CD8-positive, alpha-beta memory T cell (primary cell): ENCODE measurements at regions of chr11 and their contacts with region 1.

Region 1: DNA sequence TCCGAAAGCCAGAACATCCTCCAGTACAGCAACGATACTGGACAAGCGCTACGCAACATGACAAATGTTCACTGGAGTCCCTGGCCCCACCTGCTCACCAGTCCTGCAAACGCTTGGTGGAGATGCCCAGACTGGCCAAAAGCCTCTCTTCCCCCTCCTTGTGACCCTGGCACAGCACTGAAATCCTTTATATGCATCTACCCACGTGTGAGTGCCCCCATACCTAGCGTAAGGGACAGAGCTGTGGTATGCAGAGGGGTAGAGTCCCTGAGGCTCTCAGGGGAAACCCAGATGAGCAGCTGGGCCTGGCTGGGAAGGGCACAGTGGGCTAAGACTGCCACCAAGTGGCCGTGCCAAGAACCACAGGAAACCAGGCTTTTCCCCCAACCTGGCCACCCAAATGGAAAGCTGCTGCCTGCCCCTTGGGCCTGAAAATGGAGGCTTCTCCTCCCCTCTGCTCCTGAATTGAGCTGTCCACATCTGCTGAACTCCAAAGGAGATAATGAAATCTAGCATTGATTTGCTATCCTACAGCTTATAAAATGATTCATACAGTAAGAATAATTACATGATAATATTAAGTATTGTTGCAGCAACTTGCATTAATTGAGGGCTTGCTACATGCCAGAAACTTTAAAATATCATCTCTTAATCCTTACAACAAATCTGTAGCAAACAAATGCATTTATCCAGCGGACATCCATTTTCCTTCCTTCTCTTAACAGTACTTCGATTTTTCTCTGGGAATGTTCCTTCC is 24.8 kb upstream of the TTC12 start:
- DNase-seq: peak; percentile 20 to 69 (median 40)
- H3K4me3 ChIP-seq: no peak overlapping the region
- H3K4me3 Mint-ChIP-seq: no peak overlapping the region
- H3K27ac ChIP-seq: no peak overlapping the region
- H3K27ac Mint-ChIP-seq: no peak overlapping the region
- H3K4me1 ChIP-seq: no peaks in the 10 kb centered on the region
- H3K4me1 Mint-ChIP-seq: no peaks in the 10 kb centered on the region
- H3K27me3 ChIP-seq: no peaks in the 10 kb centered on the region
- H3K27me3 Mint-ChIP-seq: peaks cover 7 to 15% of the 10 kb centered on the region in 2 donors

Region 2: DNA sequence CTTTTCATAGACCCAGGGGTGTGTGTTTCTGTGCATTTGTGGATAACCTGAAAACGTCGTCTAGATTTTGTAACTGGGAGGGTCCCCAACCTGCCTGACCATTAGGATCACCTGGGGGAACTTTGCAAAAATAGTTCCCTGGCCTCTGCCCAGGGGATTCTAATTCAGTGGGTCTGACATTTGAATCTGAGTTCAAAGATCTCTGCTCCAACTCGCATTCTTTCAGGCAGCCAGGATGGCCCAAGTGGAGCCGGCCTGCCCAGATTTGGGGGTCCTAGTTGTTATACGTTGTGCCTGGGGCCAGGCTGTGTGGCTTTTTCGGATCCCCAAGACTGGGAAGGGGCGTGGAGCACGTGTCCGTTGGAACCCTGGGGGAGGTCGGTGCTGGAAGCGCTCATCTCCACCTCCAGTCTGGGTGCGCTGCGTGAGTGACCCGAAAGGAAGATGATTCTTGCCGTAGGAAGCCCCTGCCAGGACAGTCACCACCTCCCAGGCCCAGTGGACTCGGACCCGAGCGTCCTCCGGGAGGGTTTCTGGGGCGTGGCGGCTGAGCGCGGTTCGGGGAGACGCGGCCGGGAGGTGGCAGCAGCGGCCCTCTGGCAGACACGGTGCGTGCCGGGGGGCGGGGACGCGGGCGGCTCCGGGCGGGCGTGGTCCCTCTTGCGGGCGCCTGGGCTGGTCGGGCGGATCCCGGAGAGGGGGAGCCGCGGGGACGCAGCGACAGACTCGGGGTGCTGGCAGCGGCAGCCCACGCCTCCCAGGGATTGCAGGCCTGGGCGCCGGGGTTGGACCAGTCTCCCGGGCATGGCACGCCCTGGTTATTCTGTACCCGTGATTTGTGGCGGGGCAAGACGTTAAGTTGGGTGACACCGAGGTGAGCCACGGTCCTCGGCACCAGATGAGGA is 999.8 kb before region 1 on chr11:
- CTCF ChIA-PET with region 1: interaction called, 13 read pairs
- POLR2A ChIA-PET with region 1: no interaction called
- DNase-seq: peak; percentile 77 to 86 (median 80)
- H3K4me3 ChIP-seq: peak overlapping the region; percentile 69
- H3K4me3 Mint-ChIP-seq: peak overlapping the region; percentile 64 to 81 (median 79)
- H3K27ac ChIP-seq: no peak overlapping the region
- H3K27ac Mint-ChIP-seq: peak overlapping the region in 5 of 8 donors; percentile 17 to 71 (median 54)
- H3K4me1 ChIP-seq: peaks cover 9% of the 10 kb centered on the region
- H3K4me1 Mint-ChIP-seq: peaks cover 12 to 20% (median 13%) of the 10 kb centered on the region in 3 donors
- H3K27me3 ChIP-seq: no peaks in the 10 kb centered on the region
- H3K27me3 Mint-ChIP-seq: no peaks in the 10 kb centered on the region

Region 3: DNA sequence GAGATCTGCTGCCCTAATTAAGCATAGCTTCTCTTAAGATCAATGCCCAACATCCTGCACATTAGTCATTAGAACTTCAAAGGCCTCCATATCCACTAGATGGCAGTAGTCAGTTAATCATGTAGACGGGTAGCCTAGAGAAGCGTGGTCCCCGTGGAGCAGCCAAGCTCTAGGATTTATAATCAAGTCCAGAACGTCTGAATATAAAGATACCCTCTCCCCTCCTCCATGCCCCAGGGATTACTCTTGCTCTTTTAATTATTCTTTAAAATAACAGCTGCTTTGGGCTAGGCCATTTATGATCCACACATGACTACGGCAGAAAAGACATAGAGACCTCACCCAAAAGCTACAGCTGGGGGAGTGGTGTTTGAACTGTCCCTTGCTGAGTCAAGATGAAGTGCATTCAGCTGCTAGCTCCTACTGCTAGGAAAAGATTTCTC is 701.3 kb before region 1 on chr11:
- CTCF ChIA-PET with region 1: interaction called, 16 read pairs
- POLR2A ChIA-PET with region 1: no interaction called
- DNase-seq: peak in 4 of 5 donors; percentile 15 to 48 (median 28)
- H3K4me3 ChIP-seq: no peak overlapping the region
- H3K4me3 Mint-ChIP-seq: peak overlapping the region in 2 of 7 donors; percentile 26 to 55
- H3K27ac ChIP-seq: no peak overlapping the region
- H3K27ac Mint-ChIP-seq: peak overlapping the region in 2 of 8 donors; percentile 40 to 90
- H3K4me1 ChIP-seq: no peaks in the 10 kb centered on the region
- H3K4me1 Mint-ChIP-seq: peaks cover 2 to 5% (median 3%) of the 10 kb centered on the region in 3 donors
- H3K27me3 ChIP-seq: no peaks in the 10 kb centered on the region
- H3K27me3 Mint-ChIP-seq: peaks cover 3% of the 10 kb centered on the region in 2 donors

Region 4: GRCh38 chr11:113315811-113316210 is 26.2 kb after region 1 on chr11:
- CTCF ChIA-PET with region 1: no interaction called
- POLR2A ChIA-PET with region 1: no interaction called
- DNase-seq: no peak
- H3K4me3 ChIP-seq: no peak overlapping the region
- H3K4me3 Mint-ChIP-seq: peak overlapping the region; percentile 74 to 90 (median 84)
- H3K27ac ChIP-seq: no peak overlapping the region
- H3K27ac Mint-ChIP-seq: peak overlapping the region in 7 of 8 donors; percentile 87 to 94 (median 92)
- H3K4me1 ChIP-seq: peaks cover 16% of the 10 kb centered on the region
- H3K4me1 Mint-ChIP-seq: peaks cover 29 to 48% (median 37%) of the 10 kb centered on the region in 3 donors
- H3K27me3 ChIP-seq: no peaks in the 10 kb centered on the region
- H3K27me3 Mint-ChIP-seq: no peaks in the 10 kb centered on the region